ENCODE measurements at regions of chr1 and their contacts with region 1.

Region 1: GRCh38 chr1:153572569-153573015 is 6.9 kb upstream of the S100A2 start:
- DNase-seq: peak; percentile 77 to 83
- ATAC-seq: peak; percentile 87 to 92 (median 91)
- H3K4me3 ChIP-seq: no peak overlapping the region
- H3K27ac ChIP-seq: peak overlapping the region in 7 of 10 donors; percentile 18 to 78 (median 45)
- H3K4me1 ChIP-seq: peaks cover 5 to 35% (median 19%) of the 10 kb centered on the region in 9 donors
- H3K27me3 ChIP-seq: no peaks in the 10 kb centered on the region
- CTCF ChIP-seq: peak; percentile 67 to 93 (median 80)

Region 2: DNA sequence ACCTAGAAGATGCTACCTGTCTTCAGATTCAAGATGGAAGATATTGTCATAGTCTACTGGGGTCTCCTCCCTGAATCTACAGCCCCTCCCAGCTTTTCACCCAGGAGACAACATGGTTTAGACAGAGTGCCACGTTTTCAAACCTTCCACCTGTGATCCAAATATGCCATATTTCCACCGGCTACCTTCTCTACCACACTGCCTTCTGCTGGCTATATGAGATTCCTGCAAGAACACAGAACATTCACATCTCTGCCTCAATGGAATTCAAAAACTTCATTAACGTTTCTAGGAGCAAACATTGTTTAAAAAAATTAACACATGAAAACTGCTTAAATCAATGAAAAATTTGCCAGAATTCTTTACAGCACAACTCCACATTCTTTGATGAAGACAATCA is 382.2 kb before region 1 on chr1:
- intact Hi-C with region 1: no loop called
- DNase-seq: no peak
- ATAC-seq: no peak
- H3K4me3 ChIP-seq: no peak overlapping the region
- H3K27ac ChIP-seq: no peak overlapping the region
- H3K4me1 ChIP-seq: no peaks in the 10 kb centered on the region
- H3K27me3 ChIP-seq: peaks cover 0 to 40% (median 9%) of the 10 kb centered on the region in 7 donors
- CTCF ChIP-seq: no peak

Region 3: GRCh38 chr1:153352523-153352922 is 220.1 kb before region 1 on chr1:
- intact Hi-C with region 1: loop called in 6 of 10 experiments (anchors 5 to 10 kb)
- DNase-seq: peak; percentile 50 to 54
- ATAC-seq: peak in 7 of 8 donors; percentile 62 to 86 (median 81)
- H3K4me3 ChIP-seq: no peak overlapping the region
- H3K27ac ChIP-seq: no peak overlapping the region
- H3K4me1 ChIP-seq: peaks cover 0 to 19% (median 0%) of the 10 kb centered on the region in 9 donors
- H3K27me3 ChIP-seq: peaks cover 0 to 44% (median 24%) of the 10 kb centered on the region in 7 donors
- CTCF ChIP-seq: peak; percentile 78 to 95 (median 93)

Region 4: GRCh38 chr1:153422450-153423068 is 150.0 kb before region 1 on chr1:
- intact Hi-C with region 1: no loop called
- DNase-seq: peak; percentile 61 to 67
- ATAC-seq: peak in 5 of 8 donors; percentile 38 to 67 (median 58)
- H3K4me3 ChIP-seq: no peak overlapping the region
- H3K27ac ChIP-seq: no peak overlapping the region
- H3K4me1 ChIP-seq: no peaks in the 10 kb centered on the region
- H3K27me3 ChIP-seq: peaks cover 0 to 30% (median 19%) of the 10 kb centered on the region in 7 donors
- CTCF ChIP-seq: no peak

Region 5: GRCh38 chr1:153532769-153533599 is 39.6 kb before region 1 on chr1:
- intact Hi-C with region 1: loop called (anchors 1 to 5 kb)
- DNase-seq: peak; percentile 82 to 83
- ATAC-seq: peak; percentile 46 to 75 (median 53)
- H3K4me3 ChIP-seq: peak overlapping the region in 9 of 10 donors; percentile 11 to 93 (median 73)
- H3K27ac ChIP-seq: peak overlapping the region in 9 of 10 donors; percentile 3 to 99 (median 98)
- H3K4me1 ChIP-seq: peaks cover 3 to 54% (median 35%) of the 10 kb centered on the region in 9 donors
- H3K27me3 ChIP-seq: no peaks in the 10 kb centered on the region
- CTCF ChIP-seq: peak; percentile 57 to 91 (median 85)

Region 6: DNA sequence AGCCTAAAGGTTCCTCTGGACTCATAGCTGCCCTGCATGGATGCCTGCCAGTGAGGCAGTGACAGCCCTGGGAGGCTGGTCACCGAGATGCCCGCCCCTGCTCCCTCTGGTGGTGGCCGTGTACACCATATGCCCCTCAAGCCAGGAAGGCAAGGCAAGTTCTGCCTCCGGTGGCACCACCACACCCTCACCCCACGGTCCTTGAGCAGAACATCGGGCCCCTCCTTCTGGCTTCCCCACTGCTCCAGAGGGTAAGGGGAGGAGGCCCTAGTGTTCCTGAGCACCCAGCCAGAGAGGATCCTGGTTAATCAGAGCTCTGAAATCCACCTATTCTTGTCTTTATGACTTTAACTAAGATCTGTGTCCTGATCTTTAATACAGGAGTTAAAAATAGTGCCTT is 45.1 kb after region 1 on chr1:
- intact Hi-C with region 1: loop called in 7 of 10 experiments (anchors 1 to 5 kb)
- DNase-seq: peak; percentile 77 to 84
- ATAC-seq: peak in 7 of 8 donors; percentile 37 to 87 (median 71)
- H3K4me3 ChIP-seq: no peak overlapping the region
- H3K27ac ChIP-seq: peak overlapping the region in 6 of 10 donors; percentile 14 to 70 (median 59)
- H3K4me1 ChIP-seq: peaks cover 5 to 30% (median 21%) of the 10 kb centered on the region in 9 donors
- H3K27me3 ChIP-seq: no peaks in the 10 kb centered on the region
- CTCF ChIP-seq: peak in 8 of 9 donors; percentile 40 to 92 (median 66)

Region 7: GRCh38 chr1:153670859-153671627 is 98.5 kb after region 1 on chr1 and contains the start of gene ILF2:
- intact Hi-C with region 1: loop called in 4 of 10 experiments (anchors 5 to 10 kb)
- DNase-seq: peak; percentile 97 to 99
- ATAC-seq: peak; percentile 95 to 98 (median 97)
- H3K4me3 ChIP-seq: peak within 1 kb of the TSS; percentile 55 to 98 (median 80)
- H3K27ac ChIP-seq: peak within 1 kb of the TSS; percentile 21 to 92 (median 85)
- H3K4me1 ChIP-seq: peaks cover 0 to 30% (median 19%) of the 10 kb centered on the region in 9 donors
- H3K27me3 ChIP-seq: no peaks in the 10 kb centered on the region
- CTCF ChIP-seq: peak in 6 of 9 donors; percentile 19 to 50 (median 31)
- total RNA-seq, gene ILF2: 61.1 to 87.3 (median 70.8) TPM

Region 8: GRCh38 chr1:153749408-153750005 is 176.9 kb after region 1 on chr1:
- intact Hi-C with region 1: loop called in 3 of 10 experiments (anchors 10 kb)
- DNase-seq: peak; percentile 82 to 86
- ATAC-seq: peak; percentile 89 to 96 (median 94)
- H3K4me3 ChIP-seq: no peak overlapping the region
- H3K27ac ChIP-seq: peak overlapping the region in 9 of 10 donors; percentile 24 to 76 (median 71)
- H3K4me1 ChIP-seq: peaks cover 26 to 75% (median 43%) of the 10 kb centered on the region in 9 donors
- H3K27me3 ChIP-seq: no peaks in the 10 kb centered on the region
- CTCF ChIP-seq: peak; percentile 85 to 97 (median 95)

Measured in heart right ventricle (tissue), 16 donors.